ENCODE measurements at regions of chr9 and their contacts with region 1.

Region 1: DNA sequence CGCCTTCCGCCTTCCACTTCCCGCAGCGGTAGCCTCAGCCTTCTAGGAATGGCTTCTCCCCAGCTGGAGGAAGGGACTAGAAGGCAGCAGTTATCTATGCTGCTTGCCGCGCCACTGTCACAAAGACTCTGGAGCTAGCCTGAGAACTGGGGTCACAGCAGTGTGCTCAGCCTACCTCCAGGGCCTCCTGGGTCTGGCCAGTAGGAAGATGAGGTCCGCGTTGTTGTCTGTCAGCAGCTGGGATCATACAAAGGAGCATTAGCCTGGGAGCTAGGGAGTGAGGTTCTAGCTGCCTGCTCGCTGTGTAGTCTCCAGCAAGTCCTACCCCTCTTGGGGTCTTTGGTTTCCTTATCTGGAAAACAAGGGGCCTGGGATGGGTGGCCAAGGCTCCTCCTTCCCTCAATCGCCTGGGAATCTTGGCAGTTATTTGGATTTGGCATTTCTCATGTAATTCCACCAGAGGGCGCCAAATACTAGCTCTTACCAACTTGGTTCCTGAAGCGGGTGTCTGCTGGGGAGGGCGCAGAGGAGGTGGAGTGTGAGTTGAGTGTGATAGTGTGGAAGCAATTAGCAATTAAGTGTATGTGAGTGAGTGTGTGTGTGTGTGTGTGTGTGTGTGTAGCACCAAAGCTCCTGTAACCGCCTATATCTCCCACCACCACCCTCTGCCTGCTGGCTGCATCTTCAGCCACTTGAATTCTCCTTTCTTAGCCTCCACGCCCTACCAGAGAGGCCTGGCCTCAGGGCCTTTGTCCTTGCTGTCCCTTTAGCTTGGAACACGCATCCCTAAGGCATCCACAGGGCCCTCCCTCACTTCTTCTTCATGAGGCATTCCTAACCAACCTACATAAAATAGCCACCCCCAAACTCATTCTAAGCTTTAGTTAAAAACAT is 97.1 kb downstream of the ENTREP1 start:
- DNase-seq: no peak
- ATAC-seq: peak; percentile 81 to 84
- H3K4me3 ChIP-seq: no peak overlapping the region
- H3K27ac ChIP-seq: no peak overlapping the region
- H3K4me1 ChIP-seq: no peaks in the 10 kb centered on the region
- H3K27me3 ChIP-seq: no peaks in the 10 kb centered on the region
- CTCF ChIP-seq: peak; percentile 73

Region 2: GRCh38 chr9:69549310-69550202 is 127.4 kb after region 1 on chr9:
- intact Hi-C with region 1: loop called (anchors 5 kb)
- DNase-seq: no peak
- ATAC-seq: peak; percentile 67 to 78
- H3K4me3 ChIP-seq: no peak overlapping the region
- H3K27ac ChIP-seq: no peak overlapping the region
- H3K4me1 ChIP-seq: no peaks in the 10 kb centered on the region
- H3K27me3 ChIP-seq: no peaks in the 10 kb centered on the region
- CTCF ChIP-seq: peak; percentile 81

Measured in lower lobe of right lung (tissue), 2 donors.